SK-N-SH (cell line): ENCODE measurements at regions of chr17 and their contacts with region 1.

Region 1: GRCh38 chr17:2416010-2416734 is 15.3 kb upstream of the MNT start:
- DNase-seq: peak; percentile 88
- H3K4me3 ChIP-seq: no peak overlapping the region; a peak in 1 of 4 replicates
- H3K27ac ChIP-seq: peak overlapping the region; percentile 39 to 41; a peak in 2 of 4 replicates
- H3K4me1 ChIP-seq: peaks cover 0 to 6% of the 10 kb centered on the region in 2 experiments; a peak in 1 of 4 replicates
- H3K27me3 ChIP-seq: no peaks in the 10 kb centered on the region
- CTCF ChIP-seq: peak; percentile 98
- EP300 ChIP-seq: no peak
- RAD21 ChIP-seq: peak; percentile 92

Region 2: DNA sequence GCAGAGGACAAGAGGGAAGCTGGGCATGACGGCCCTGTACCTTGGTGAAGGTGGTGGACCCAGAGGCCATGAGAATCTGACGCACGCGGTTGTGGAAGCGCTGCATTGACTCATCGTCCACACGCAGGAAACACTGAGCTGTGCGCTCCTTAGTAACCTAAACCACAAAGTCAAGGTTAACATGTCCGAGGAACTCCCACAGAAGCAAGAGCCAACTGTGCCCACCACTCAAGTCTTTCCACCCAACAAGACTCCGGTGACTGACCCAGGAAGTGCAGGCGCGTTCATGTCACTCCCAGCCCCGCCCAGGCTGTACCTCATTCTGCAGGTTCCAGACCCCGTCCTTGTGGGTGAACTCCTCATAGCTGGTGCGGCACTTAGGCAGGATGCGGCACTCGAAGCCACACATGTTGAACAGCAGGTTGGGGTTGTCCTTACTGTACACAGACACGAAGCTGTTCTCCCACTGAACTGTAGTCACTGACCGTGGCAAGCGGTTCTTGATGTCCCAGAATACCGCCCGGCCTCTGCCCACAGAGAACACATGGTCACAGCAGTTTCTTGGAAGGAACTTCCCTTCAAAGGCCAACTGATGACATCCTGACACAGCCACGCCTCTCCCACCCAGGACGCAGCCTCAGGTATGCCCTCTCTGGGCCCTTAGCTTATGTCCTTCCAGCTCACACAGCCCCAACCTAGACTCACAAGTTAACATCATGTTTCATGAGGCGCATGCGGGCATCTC is 743.0 kb before region 1 on chr17:
- CTCF ChIA-PET with region 1: no interaction called
- POLR2A ChIA-PET with region 1: no interaction called
- DNase-seq: no peak
- H3K4me3 ChIP-seq: no peak overlapping the region
- H3K27ac ChIP-seq: no peak overlapping the region
- H3K4me1 ChIP-seq: peaks cover 0 to 2% of the 10 kb centered on the region in 2 experiments; a peak in 1 of 4 replicates
- H3K27me3 ChIP-seq: no peaks in the 10 kb centered on the region
- CTCF ChIP-seq: no peak
- EP300 ChIP-seq: no peak
- RAD21 ChIP-seq: no peak

Region 3: GRCh38 chr17:2282297-2282873 is 133.8 kb before region 1 on chr17:
- CTCF ChIA-PET with region 1: no interaction called
- POLR2A ChIA-PET with region 1: no interaction called
- DNase-seq: peak; percentile 61
- H3K4me3 ChIP-seq: no peak overlapping the region
- H3K27ac ChIP-seq: peak overlapping the region in 1 of 2 experiments; percentile 26; a peak in 2 of 4 replicates
- H3K4me1 ChIP-seq: no peaks in the 10 kb centered on the region; a peak in 1 of 4 replicates
- H3K27me3 ChIP-seq: no peaks in the 10 kb centered on the region
- CTCF ChIP-seq: peak; percentile 74
- EP300 ChIP-seq: no peak
- RAD21 ChIP-seq: peak; percentile 70

Region 4: DNA sequence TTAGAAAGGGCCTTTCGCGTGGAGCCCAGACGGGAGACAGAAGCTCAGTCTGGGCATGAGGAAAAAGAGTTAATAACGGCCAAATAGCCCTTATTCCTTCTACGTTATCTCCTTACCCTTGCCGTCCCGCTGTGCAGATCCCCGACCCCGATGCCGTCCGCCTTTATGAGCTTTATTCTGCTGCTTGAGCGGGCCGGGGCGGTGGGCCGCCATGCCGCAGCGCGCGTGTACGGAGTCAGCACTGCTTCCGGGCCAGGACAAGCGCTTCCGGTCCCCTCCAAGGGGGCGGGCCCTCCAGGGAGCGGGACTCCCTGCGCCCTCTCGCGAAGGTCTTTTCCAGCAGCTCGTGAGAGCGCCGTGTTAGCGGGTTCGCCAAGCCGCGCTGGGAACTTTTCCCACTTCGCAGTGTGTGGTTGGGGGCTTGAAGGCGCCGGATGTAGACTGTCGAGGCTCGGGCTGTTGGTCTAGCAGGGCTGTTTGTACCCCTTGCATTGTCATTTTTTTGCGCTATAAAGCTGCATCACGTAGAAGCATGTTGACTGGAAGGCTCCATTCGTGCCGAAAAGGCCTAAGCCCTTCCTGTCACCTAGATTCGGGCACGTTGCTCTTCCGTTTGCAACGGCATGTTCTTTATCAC is 79.8 kb before region 1 on chr17 and contains the start of gene TSR1:
- CTCF ChIA-PET with region 1: interaction called, 14 read pairs
- POLR2A ChIA-PET with region 1: interaction called, 3 read pairs
- DNase-seq: peak; percentile 97
- H3K4me3 ChIP-seq: peak within 1 kb of the TSS; percentile 98 to 99
- H3K27ac ChIP-seq: peak within 1 kb of the TSS; percentile 80 to 94
- H3K4me1 ChIP-seq: peaks cover 6 to 17% of the 10 kb centered on the region in 2 experiments; a peak in 3 of 4 replicates
- H3K27me3 ChIP-seq: no peaks in the 10 kb centered on the region
- CTCF ChIP-seq: peak; percentile 27; the same call in 1 of the 2 replicates
- EP300 ChIP-seq: no peak
- RAD21 ChIP-seq: no peak
- polyA plus RNA-seq, gene TSR1: 26.7 and 29.0 TPM in 2 replicates

Region 5: GRCh38 chr17:2361010-2361760 is 55.0 kb before region 1 on chr17:
- CTCF ChIA-PET with region 1: interaction called, 654 read pairs
- POLR2A ChIA-PET with region 1: no interaction called
- DNase-seq: peak; percentile 30
- H3K4me3 ChIP-seq: no peak overlapping the region
- H3K27ac ChIP-seq: no peak overlapping the region
- H3K4me1 ChIP-seq: peaks cover 2 to 16% of the 10 kb centered on the region in 2 experiments; a peak in 2 of 4 replicates
- H3K27me3 ChIP-seq: no peaks in the 10 kb centered on the region
- CTCF ChIP-seq: no peak
- EP300 ChIP-seq: no peak
- RAD21 ChIP-seq: no peak

Region 6: GRCh38 chr17:2392252-2393173 is 23.7 kb before region 1 on chr17:
- CTCF ChIA-PET with region 1: interaction called, 654 read pairs
- POLR2A ChIA-PET with region 1: interaction called, 3 read pairs
- DNase-seq: peak; percentile 97
- H3K4me3 ChIP-seq: peak overlapping the region; percentile 66 to 79
- H3K27ac ChIP-seq: peak overlapping the region; percentile 98 to 99
- H3K4me1 ChIP-seq: peaks cover 26 to 45% of the 10 kb centered on the region in 2 experiments; a peak in 3 of 4 replicates
- H3K27me3 ChIP-seq: no peaks in the 10 kb centered on the region
- CTCF ChIP-seq: no peak
- EP300 ChIP-seq: no peak
- RAD21 ChIP-seq: no peak

Region 7: GRCh38 chr17:2427215-2427614 is 11.0 kb after region 1 on chr17:
- CTCF ChIA-PET with region 1: interaction called, 38 read pairs
- POLR2A ChIA-PET with region 1: no interaction called
- DNase-seq: no peak
- H3K4me3 ChIP-seq: no peak overlapping the region
- H3K27ac ChIP-seq: no peak overlapping the region
- H3K4me1 ChIP-seq: no peaks in the 10 kb centered on the region
- H3K27me3 ChIP-seq: no peaks in the 10 kb centered on the region
- CTCF ChIP-seq: no peak
- EP300 ChIP-seq: no peak
- RAD21 ChIP-seq: no peak